Right ventricle myocardium inferior (tissue), 1 donor: ENCODE measurements at regions of chr21 and their contacts with region 1.

Region 1: DNA sequence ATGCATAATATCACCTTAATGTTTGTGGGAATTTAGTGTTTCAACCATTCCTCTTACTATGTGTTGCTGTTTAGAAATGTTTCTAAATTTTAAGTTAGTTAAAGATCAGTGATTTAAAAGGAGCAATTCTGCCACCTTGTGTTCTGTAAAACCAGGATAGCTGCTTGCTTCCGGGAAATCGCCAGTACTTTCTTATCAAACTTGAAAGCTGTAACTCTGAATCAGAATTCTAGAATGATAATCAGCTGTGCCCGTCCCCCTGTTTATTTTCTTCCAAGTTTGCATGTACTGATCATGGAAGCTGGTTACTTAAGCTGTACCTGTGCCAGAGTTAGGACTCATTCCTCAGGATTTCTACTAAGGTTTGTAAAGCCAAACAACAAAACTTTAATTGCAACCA is 656.4 kb downstream of the LTN1 start:
- DNase-seq: no peak
- ATAC-seq: peak; percentile 64

Region 2: DNA sequence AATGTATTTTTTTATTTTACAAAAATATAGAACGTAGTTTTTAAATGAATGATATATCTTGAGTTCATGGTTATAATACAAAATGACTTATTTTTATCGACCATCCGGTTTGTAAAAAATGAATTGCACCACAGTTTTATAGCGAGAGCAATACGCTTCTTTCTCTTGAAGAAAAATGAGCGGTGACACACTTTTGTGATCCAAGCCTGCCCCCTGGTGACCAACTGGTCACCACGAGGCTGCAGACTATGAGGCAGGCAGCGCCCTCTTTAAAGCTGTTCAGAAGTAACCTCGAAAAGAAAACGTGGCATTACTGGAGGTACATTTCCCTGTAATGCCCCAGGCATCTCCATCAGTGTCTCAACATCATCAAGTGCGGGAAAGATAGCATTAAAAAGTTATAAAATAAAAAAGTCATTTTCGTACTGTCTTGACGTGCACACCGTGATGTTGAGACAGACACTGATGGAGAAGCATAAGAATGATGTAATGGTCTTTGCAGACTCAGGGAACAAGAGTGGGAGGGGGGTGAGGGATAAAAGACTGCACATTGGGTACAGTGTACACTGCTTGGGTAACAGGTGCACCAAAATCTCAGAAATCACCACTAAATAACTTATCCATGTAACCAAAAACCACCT is 635.2 kb before region 1 on chr21:
- intact Hi-C with region 1: loop called (anchors 2 kb)
- DNase-seq: peak; percentile 82
- ATAC-seq: peak; percentile 93

Region 3: GRCh38 chr21:28069450-28069923 is 266.8 kb before region 1 on chr21:
- intact Hi-C with region 1: loop called (anchors 5 kb)
- DNase-seq: no peak
- ATAC-seq: no peak

Region 4: GRCh38 chr21:28283641-28284490 is 52.4 kb before region 1 on chr21:
- intact Hi-C with region 1: no loop called
- DNase-seq: no peak
- ATAC-seq: peak; percentile 94

Region 5: GRCh38 chr21:28516991-28517592 is 180.8 kb after region 1 on chr21:
- intact Hi-C with region 1: loop called (anchors 2 kb)
- DNase-seq: peak; percentile 64
- ATAC-seq: peak; percentile 92

Region 6: GRCh38 chr21:28793043-28793442 is 456.7 kb after region 1 on chr21:
- intact Hi-C with region 1: loop called (anchors 5 kb)
- DNase-seq: no peak
- ATAC-seq: no peak